GM10248 (cell line): ENCODE measurements at regions of chr12 and their contacts with region 1.

Region 1: GRCh38 chr12:27243804-27244683 is at the start of gene STK38L:
- DNase-seq: peak; percentile 95
- CTCF ChIP-seq: peak; percentile 18

Region 2: DNA sequence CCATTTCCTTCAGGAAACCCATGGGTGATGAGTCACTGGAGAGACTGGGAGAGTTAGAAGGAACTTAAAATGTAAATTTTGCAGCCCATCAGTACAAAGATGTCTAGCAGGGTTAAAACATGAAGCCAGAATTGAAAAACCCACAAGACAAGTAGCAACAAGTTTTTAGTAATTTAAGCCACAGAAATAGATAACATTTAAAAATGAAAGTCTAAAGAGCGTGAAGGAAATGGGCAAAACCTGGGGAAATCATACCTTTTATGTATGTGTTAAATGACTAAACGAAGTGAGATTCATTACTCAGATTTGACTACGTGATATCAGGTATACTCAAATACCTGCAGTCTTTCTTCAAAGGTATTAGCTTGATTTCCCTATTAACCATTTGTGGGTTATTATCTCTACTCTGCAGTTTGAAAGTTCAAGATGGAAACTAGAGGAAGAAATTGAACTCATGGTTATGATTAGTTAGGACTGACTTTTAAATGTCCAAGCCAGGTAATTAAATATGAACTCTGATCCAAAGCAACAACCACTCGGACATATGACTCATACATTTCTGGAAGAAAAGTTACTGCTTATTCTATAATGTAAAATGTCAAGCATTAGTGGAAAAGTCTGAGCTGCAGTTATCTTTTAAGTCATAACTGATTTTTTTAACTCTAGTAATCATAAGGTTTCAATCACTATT is 495.2 kb before region 1 on chr12:
- CTCF ChIA-PET with region 1: no interaction called
- POLR2A ChIA-PET with region 1: no interaction called
- DNase-seq: peak; percentile 30
- CTCF ChIP-seq: no peak

Region 3: GRCh38 chr12:27257104-27257843 is 13.2 kb after region 1 on chr12:
- CTCF ChIA-PET with region 1: interaction called, 11 read pairs
- POLR2A ChIA-PET with region 1: interaction called, 5 read pairs
- DNase-seq: no peak
- CTCF ChIP-seq: no peak